ENCODE measurements at regions of chr11 and their contacts with region 1.

Region 1: GRCh38 chr11:9613118-9613829 is 39.8 kb downstream of the WEE1 start:
- H3K4me3 Mint-ChIP-seq: peak overlapping the region; percentile 88
- H3K27ac Mint-ChIP-seq: peak overlapping the region; percentile 86
- H3K4me1 Mint-ChIP-seq: peaks cover 37% of the 10 kb centered on the region
- H3K27me3 Mint-ChIP-seq: no peaks in the 10 kb centered on the region

Region 2: GRCh38 chr11:9461760-9462134 is 151.5 kb before region 1 on chr11:
- intact Hi-C with region 1: no loop called
- H3K4me3 Mint-ChIP-seq: peak overlapping the region; percentile 98
- H3K27ac Mint-ChIP-seq: peak overlapping the region; percentile 98
- H3K4me1 Mint-ChIP-seq: peaks cover 12% of the 10 kb centered on the region
- H3K27me3 Mint-ChIP-seq: no peaks in the 10 kb centered on the region

Region 3: DNA sequence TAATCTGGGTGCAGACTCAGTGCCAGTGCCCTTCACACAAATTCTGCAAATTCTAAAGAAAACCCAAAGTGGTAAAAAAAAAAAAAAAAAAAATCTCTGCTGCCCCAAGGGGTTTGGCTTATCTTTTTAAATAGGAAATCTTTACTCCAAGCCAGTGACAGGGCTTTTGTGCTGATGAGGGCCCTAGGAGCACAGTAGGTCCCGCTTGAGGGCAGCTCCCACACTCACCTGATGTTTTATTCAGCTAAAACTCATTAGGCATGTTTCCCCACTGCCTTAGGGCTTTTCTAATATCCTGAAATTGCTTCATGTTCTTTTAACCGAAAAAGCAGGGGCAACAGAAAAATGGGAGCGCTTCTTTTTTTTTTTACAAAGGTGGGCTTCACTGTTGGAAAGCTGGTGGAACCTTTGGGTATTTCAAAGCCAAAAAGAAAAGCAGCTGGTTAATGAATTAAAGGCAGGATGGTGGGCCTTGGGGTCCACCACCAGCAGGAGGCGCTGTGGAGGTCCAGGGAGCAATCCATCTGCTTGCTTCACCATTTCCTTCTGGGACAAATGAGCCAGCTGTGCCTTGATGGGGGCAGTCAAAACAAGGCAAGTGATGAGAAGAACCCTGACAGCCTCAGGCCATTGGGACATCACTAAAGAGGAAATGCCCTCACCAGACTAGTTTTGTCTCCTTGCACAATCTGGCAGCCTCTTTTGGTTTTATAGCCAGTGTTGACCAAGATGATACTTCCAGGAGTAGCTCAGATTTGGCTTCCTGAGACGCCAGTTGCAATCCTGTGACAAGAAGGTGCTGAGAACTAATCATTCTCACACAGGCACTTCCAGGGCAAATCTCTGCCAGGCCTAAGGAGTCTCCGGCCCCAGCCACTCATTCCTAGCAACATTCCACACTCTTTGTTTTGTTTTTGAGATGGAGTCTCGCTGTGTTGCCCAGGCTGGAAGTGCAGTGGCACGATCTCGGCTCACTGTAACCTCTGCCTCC is 78.2 kb before region 1 on chr11:
- intact Hi-C with region 1: loop called (anchors 1 kb)
- H3K4me3 Mint-ChIP-seq: no peak overlapping the region
- H3K27ac Mint-ChIP-seq: no peak overlapping the region
- H3K4me1 Mint-ChIP-seq: no peaks in the 10 kb centered on the region
- H3K27me3 Mint-ChIP-seq: no peaks in the 10 kb centered on the region

Region 4: DNA sequence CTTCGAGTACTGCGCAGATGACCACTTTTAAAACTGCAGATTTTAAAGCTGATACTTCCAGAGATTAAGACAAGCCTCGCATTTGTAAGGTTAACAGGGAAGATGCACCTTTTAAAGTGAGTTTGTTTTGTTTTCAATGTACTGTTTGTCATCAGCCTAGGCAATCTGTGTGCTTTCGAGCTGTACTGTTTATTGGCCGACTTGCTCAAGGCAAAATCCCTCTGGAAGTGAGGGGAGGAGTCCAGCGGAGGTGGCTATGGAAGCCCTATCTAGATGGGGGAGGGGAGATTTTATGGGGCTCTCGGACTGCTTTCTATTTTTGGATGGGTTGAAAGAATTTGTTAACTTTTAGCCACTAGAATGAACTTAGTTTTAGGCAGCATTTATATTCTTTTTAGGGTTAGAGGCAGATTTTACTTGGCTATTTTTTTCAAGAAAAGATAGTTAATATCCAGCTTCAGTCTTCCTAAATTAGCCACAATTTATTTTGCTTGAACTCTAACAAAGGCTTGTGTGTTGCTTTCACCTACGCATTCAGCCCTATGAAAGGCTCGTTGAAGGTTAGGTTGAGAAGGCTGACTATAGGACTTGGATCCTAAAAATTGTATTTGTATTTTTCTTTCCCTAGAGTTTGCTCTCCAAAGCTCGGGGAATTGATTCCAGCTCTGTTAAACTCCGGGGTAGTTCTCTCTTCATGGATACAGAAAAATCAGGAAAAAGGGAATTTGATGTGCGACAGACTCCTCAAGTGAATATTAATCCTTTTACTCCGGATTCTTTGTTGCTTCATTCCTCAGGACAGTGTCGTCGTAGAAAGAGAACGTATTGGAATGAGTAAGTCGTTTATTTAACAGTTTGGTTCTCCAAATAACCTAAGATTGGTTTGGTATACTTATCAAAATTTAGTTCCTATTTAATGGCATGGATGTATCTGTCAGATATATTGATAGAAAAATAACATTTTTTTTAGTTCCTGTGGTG is 37.7 kb before region 1 on chr11:
- intact Hi-C with region 1: loop called (anchors 2 kb)
- H3K4me3 Mint-ChIP-seq: peak overlapping the region; percentile 81
- H3K27ac Mint-ChIP-seq: peak overlapping the region; percentile 64
- H3K4me1 Mint-ChIP-seq: peaks cover 16% of the 10 kb centered on the region
- H3K27me3 Mint-ChIP-seq: peaks cover 13% of the 10 kb centered on the region

Region 5: DNA sequence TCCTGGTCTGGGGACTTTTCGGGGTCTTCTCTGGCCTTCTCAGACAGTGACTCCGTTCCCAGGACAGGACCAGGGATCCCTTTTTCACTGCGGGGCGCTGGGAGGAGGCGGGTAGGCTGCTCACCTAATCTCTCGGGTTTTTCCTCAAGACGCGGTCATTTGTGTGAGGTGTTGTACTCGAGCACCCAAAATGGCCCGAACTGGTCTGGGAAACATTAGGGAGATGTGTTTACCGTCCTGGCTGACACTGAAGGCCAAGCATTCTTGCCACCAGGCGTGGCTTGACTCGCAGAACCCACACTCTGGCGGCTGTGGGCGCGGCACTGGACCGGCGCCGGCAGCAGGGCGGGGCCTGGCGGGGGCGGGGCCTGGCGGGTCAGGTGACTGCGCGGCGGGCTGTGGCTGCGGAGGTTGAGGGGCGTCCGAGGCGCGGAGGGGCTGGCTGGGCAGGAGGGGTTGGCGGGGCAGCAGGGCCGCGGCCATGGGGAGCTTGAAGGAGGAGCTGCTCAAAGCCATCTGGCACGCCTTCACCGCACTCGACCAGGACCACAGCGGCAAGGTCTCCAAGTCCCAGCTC is 50.5 kb after region 1 on chr11 and contains the start of gene SWAP70:
- intact Hi-C with region 1: loop called (anchors 2 kb)
- H3K4me3 Mint-ChIP-seq: peak within 1 kb of the TSS; percentile 99
- H3K27ac Mint-ChIP-seq: peak within 1 kb of the TSS; percentile 94
- H3K4me1 Mint-ChIP-seq: peaks cover 70% of the 10 kb centered on the region
- H3K27me3 Mint-ChIP-seq: no peaks in the 10 kb centered on the region

Region 6: GRCh38 chr11:9748361-9748970 is 135.2 kb after region 1 on chr11:
- intact Hi-C with region 1: loop called (anchors 1 kb)
- H3K4me3 Mint-ChIP-seq: no peak overlapping the region
- H3K27ac Mint-ChIP-seq: no peak overlapping the region
- H3K4me1 Mint-ChIP-seq: peaks cover 35% of the 10 kb centered on the region
- H3K27me3 Mint-ChIP-seq: no peaks in the 10 kb centered on the region